ENCODE measurements at regions of chr12 and their contacts with region 1.

Region 1: DNA sequence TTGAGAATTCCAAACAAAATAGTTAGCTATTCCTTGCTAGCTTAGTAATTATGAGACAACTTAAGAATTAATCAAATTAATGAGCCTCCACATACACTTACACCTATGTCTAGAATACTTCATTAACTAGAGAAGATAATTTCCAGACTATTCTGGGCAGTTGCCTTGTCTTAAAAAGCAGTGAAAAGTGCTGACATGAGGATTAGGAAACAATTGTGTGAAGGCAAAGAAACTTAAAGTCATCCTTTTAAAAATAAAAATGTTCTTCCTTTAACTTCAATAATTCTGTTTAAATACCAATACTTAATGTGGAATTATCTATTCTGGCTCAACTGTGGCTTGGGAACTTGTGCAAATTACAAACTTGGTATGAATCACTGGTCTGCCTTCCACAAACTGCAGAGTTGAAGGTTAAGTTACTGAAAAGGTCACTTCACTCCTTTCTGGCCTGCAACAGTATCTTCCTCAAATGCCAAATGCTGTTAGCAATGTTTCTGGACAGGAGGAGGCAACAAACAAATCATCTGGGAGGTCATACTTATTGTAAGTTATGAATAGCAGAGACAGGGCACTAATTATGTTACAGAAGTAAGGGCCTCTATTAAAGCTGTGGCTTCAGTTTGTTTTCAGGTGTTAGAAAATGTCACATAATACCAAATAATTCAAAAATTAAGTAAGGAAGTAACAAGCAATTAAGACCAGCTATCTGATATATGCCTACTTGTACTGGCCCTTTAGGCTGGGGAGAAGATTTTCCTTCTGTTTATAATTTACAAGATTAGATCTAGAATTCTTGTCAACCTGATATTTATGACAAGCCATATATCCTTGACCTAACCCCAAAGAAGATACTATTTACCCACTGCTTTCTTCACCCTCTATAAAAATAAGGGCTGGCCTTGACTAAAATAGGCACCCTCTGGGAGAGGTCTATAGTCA is 19.1 kb downstream of the PPTC7 start:
- DNase-seq: peak; percentile 56
- ATAC-seq: peak; percentile 81
- H3K4me3 ChIP-seq: no peak overlapping the region
- H3K27ac ChIP-seq: no peak overlapping the region
- H3K4me1 ChIP-seq: no peaks in the 10 kb centered on the region; the same call in none of the 2 replicates
- H3K27me3 ChIP-seq: no peaks in the 10 kb centered on the region
- CTCF ChIP-seq: no peak
- POLR2A ChIP-seq: no peak
- RAD21 ChIP-seq: no peak

Region 2: DNA sequence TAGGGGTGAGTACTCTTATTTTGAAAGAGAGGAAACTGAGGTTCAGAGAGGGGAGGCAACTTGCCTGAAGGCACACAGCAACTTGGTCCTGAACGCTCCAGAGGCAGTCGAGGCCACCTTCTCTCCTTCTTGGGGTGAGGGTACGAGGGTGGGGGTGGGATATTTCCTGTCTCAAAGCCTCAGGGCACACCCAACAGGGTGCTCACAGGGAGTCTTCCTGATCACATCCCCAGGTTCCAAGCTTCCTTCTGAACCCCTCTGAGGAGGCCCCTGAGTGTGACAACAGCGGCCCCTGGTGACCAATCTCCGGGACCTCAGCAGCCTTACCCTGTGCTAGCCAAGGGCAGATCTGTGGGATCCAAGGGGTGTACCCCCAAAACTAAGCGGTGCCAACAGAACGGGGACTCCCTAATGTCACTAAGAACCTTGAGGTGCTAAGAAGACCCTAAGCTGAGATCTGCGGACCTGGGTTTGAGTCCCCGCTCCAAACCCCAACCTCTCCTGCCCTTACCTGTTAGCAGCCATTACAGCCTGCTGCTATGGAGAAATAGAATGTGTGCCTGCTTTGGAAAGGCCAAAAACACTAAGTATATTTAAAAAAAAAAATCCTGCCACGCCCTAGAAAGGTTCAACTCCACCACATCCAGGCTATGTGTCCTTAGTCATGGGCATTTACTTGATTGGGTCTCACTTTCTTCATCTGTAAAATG is 788.6 kb before region 1 on chr12:
- CTCF ChIA-PET with region 1: no interaction called
- POLR2A ChIA-PET with region 1: no interaction called
- dilution Hi-C with region 1: no loop called
- in situ Hi-C with region 1: no loop called
- intact Hi-C with region 1: no loop called
- DNase-seq: peak; percentile 58
- ATAC-seq: peak; percentile 95
- H3K4me3 ChIP-seq: no peak overlapping the region
- H3K27ac ChIP-seq: no peak overlapping the region
- H3K4me1 ChIP-seq: no peaks in the 10 kb centered on the region
- H3K27me3 ChIP-seq: peaks cover 3% of the 10 kb centered on the region; the same call in 1 of the 2 replicates
- CTCF ChIP-seq: peak; percentile 90
- POLR2A ChIP-seq: 0 out of 2 replicates have a peak, but pooled peaks have one; percentile 31
- RAD21 ChIP-seq: peak; percentile 96

Region 3: DNA sequence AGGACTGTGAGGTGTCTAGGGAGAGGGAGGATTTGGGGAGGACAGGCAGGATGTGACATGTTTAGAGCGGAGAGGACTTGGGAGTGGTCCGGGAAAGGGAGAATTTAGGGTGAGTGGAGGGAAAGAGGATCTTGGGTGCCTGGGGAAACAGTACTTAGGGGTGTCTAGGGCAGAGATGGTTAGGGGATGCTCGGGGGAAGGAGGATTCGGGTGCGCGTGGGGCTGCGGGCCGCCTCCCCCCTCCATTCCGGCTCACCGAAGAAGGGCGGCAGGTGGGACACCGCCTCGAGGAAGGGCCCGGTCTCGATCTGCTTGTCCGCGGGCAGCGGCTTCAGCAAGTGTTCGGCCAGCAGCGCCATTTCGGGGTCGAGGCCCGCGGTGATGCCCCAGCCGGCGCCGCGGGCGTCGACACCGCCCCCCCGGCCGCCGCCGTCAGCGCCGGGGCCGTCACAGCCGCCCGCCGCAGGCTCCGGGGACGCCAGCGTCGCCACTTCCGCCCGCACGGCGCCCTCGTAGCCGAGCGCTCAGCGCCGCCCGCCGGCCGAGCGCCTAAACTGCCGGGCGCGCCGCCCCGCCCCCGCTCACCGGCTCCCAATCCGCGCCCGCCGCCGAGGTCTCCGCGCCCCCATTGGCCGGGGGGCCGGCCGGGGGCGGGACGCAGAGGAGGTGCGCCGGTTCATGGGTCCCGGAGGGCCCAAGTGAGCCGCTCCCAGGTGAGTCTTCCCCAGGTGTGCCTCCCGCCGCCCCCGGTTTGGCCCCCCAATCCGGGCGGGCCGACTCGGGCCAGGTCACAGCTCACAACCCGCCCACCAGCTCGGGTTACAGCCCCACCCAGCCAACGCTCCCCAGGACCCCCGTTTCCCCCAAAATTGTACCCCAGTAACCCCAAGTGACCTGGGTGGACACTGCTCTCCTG is 683.7 kb before region 1 on chr12 and contains the start of gene GLTP:
- CTCF ChIA-PET with region 1: no interaction called
- POLR2A ChIA-PET with region 1: no interaction called
- dilution Hi-C with region 1: no loop called
- in situ Hi-C with region 1: no loop called
- intact Hi-C with region 1: no loop called
- DNase-seq: peak; percentile 63
- ATAC-seq: peak; percentile 99
- H3K4me3 ChIP-seq: peak within 1 kb of the TSS; percentile 76
- H3K27ac ChIP-seq: peak within 1 kb of the TSS; percentile 71
- H3K4me1 ChIP-seq: peaks cover 10% of the 10 kb centered on the region
- H3K27me3 ChIP-seq: no peaks in the 10 kb centered on the region
- CTCF ChIP-seq: peak; percentile 89
- POLR2A ChIP-seq: no peak
- RAD21 ChIP-seq: peak; percentile 80
- total RNA-seq, gene GLTP: 58.4 and 67.2 TPM in 2 replicates

Region 4: DNA sequence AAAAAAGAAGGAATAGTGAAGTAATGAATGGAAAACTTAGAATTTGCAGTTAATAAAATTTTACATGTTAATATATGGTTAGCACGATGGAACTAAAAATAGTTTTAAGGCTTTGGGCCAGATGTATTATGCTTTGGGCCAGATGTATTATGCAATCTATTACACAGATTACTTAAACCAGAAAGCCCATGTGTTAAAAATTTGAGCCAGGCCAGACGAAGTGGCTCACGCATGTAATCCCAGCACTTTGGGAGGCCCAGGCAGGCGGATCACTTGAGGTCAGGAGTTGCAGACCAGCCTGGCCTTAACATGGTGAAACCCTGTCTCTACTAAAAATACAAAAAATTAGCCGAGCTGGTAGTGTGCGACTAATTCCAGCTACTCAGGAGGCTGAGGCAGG is 422.6 kb before region 1 on chr12:
- CTCF ChIA-PET with region 1: no interaction called
- POLR2A ChIA-PET with region 1: no interaction called
- dilution Hi-C with region 1: no loop called
- in situ Hi-C with region 1: no loop called
- intact Hi-C with region 1: no loop called
- DNase-seq: peak; percentile 65
- ATAC-seq: no peak
- H3K4me3 ChIP-seq: no peak overlapping the region
- H3K27ac ChIP-seq: no peak overlapping the region
- H3K4me1 ChIP-seq: no peaks in the 10 kb centered on the region
- H3K27me3 ChIP-seq: no peaks in the 10 kb centered on the region
- CTCF ChIP-seq: no peak
- POLR2A ChIP-seq: no peak
- RAD21 ChIP-seq: no peak

Region 5: DNA sequence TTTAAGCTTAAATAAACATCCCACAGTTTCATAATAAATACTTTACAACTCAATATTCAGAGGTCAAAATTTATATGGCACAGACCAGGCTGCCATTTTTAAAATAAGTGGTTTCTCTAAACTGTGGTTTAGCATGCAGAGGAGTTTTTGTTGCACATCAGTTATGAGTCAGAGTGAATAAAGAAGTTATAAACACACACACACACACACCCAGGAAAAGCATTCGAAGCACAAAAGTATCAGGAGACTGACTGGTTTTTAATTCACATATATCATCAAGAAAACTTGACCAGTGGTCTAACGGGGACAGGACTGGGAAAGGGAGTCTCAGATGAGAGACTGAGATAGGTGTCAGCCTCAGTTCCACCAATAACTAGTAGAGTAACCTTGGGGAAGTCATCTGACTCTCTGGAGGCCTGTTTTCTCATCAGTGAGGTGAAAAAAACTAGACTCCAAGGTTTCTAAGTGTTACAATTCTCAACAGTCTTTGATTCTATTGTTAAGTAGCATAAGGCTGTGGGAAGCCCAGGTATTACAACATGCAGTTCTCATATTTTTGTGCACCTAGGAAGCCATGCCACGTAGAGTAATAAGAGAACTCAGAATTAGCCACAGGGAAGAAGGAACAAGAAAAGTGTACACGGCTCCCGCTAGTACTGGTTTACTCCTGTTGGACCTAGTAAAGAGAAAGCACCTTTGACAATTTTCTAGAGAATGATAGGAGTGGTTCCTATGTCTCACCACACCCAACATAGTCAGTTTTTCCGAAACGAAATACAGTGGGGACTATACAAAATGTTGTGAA is 13.9 kb after region 1 on chr12:
- CTCF ChIA-PET with region 1: interaction called, 7 read pairs
- POLR2A ChIA-PET with region 1: no interaction called
- dilution Hi-C with region 1: no loop called
- in situ Hi-C with region 1: no loop called
- intact Hi-C with region 1: loop called (anchors 1 kb)
- DNase-seq: peak; percentile 88
- ATAC-seq: peak; percentile 82
- H3K4me3 ChIP-seq: peak overlapping the region; percentile 0; the same call in 1 of the 2 replicates
- H3K27ac ChIP-seq: peak overlapping the region; percentile 92; the same call in 1 of the 2 replicates
- H3K4me1 ChIP-seq: peaks cover 10% of the 10 kb centered on the region
- H3K27me3 ChIP-seq: no peaks in the 10 kb centered on the region
- CTCF ChIP-seq: no peak
- POLR2A ChIP-seq: peak; percentile 24; the same call in 1 of the 2 replicates
- RAD21 ChIP-seq: no peak

Region 6: DNA sequence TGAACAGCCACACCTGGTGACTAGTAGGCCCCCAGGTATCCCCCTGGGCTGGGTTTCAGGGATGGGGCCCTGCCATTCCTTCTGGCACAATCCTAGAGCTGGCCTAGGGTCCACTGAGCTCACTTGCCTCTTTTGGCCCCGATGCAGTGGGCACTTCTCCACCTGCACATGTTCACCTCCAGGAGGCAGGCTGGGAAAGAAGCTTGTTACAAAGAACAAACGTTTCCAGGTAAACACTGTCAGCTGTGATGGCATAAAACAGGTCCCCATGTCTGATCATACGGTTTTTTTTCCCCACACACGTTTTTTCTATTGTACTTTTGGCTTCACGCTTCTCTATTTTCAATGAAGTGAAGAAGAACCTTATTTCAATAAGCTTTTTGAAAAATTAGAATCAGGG is 140.8 kb after region 1 on chr12:
- CTCF ChIA-PET with region 1: no interaction called
- POLR2A ChIA-PET with region 1: no interaction called
- dilution Hi-C with region 1: no loop called
- in situ Hi-C with region 1: no loop called
- intact Hi-C with region 1: no loop called
- DNase-seq: no peak
- ATAC-seq: no peak
- H3K4me3 ChIP-seq: no peak overlapping the region
- H3K27ac ChIP-seq: no peak overlapping the region
- H3K4me1 ChIP-seq: no peaks in the 10 kb centered on the region; the same call in 1 of the 2 replicates
- H3K27me3 ChIP-seq: no peaks in the 10 kb centered on the region
- CTCF ChIP-seq: no peak
- POLR2A ChIP-seq: no peak
- RAD21 ChIP-seq: no peak